ENCODE measurements at regions of chrX and their contacts with region 1.

Region 1: GRCh38 chrX:24063488-24063887 is 8.7 kb downstream of the EIF2S3 start:
- DNase-seq: no peak
- ATAC-seq: no peak
- H3K4me3 ChIP-seq: no peak overlapping the region
- H3K27ac ChIP-seq: no peak overlapping the region
- H3K4me1 ChIP-seq: no peaks in the 10 kb centered on the region
- H3K27me3 ChIP-seq: no peaks in the 10 kb centered on the region
- CTCF ChIP-seq: no peak

Region 2: GRCh38 chrX:23792861-23793553 is 270.5 kb before region 1 on chrX:
- CTCF ChIA-PET with region 1: no interaction called
- POLR2A ChIA-PET with region 1: interaction called, 10 read pairs
- in situ Hi-C with region 1: no loop called
- intact Hi-C with region 1: no loop called
- DNase-seq: no peak
- ATAC-seq: no peak; the same call in 1 of the 2 replicates
- H3K4me3 ChIP-seq: no peak overlapping the region
- H3K27ac ChIP-seq: peak overlapping the region; percentile 44
- H3K4me1 ChIP-seq: no peaks in the 10 kb centered on the region
- H3K27me3 ChIP-seq: no peaks in the 10 kb centered on the region
- CTCF ChIP-seq: no peak

Region 3: DNA sequence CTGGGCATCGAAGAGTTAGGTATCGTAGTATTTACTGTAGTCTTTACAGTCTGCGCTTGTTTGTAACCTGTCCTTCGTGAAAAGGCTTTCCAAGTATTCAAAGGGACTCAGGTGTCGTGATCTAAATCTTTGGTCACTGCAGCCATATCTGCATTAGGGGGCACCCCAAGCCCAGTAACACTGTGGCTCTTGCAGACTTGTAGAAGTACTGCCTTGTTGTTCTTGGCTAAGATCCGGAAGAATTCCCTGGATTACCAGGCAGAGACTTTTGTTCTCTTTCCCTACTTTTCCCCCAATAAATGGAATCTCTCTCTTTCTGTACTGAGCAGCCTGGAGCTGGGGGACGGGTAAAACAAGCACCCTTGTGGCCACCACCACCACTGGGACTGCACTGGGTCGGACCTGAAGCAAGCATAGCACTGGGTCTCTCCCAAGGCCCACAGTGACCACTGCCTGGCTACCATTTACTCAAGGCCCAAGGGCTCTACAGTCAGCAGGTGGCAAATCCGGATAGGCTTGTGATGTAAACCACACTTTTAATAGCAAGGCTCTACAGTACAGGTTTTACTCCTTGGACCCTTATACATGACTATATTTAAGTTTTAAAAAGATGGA is 143.7 kb before region 1 on chrX:
- CTCF ChIA-PET with region 1: no interaction called
- POLR2A ChIA-PET with region 1: no interaction called
- in situ Hi-C with region 1: no loop called
- intact Hi-C with region 1: no loop called
- DNase-seq: no peak
- ATAC-seq: no peak
- H3K4me3 ChIP-seq: no peak overlapping the region
- H3K27ac ChIP-seq: no peak overlapping the region
- H3K4me1 ChIP-seq: no peaks in the 10 kb centered on the region
- H3K27me3 ChIP-seq: no peaks in the 10 kb centered on the region
- CTCF ChIP-seq: no peak

Region 4: DNA sequence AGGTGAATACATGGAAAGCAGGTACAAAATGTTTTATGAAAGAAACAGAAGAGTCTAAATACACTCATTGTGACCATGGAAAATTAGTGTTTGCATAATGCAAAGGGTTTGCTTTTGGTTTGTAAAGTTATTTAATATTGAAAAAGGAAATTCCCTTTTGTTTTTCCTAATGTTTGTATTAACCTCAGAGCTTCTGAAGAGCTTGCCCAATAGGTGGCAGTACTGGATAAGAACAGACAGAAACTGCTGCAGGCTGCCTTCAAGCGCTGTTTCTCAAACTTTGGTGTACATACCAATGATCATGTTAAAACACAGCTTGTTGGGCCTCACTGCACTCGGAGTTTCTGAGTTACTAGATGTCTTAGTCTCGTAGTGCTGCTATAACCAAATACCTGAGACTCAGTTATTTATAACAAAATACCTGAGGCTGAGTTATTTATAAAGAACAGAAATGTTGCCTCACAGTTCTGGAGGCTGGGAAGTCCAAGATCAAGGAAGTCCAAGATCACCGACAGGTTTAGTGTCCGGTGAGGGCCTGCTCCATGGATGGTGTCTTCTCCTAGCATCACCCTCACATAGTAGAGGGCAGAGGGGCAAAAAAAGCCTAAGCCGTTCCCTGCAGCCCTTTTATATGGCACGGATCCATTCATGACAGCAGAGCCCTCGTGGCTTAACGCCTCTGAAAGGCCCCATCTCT is 196.2 kb after region 1 on chrX:
- CTCF ChIA-PET with region 1: no interaction called
- POLR2A ChIA-PET with region 1: no interaction called
- in situ Hi-C with region 1: no loop called
- intact Hi-C with region 1: no loop called
- DNase-seq: no peak
- ATAC-seq: no peak
- H3K4me3 ChIP-seq: no peak overlapping the region
- H3K27ac ChIP-seq: no peak overlapping the region
- H3K4me1 ChIP-seq: no peaks in the 10 kb centered on the region
- H3K27me3 ChIP-seq: no peaks in the 10 kb centered on the region
- CTCF ChIP-seq: peak; percentile 72